ENCODE measurements at regions of chr1 and their contacts with region 1.

Region 1: GRCh38 chr1:37479255-37480124 is 5.1 kb downstream of the ZC3H12A start:
- DNase-seq: peak; percentile 97
- H3K4me3 Mint-ChIP-seq: peak overlapping the region; percentile 87
- H3K27ac Mint-ChIP-seq: peak overlapping the region; percentile 99
- H3K4me1 Mint-ChIP-seq: peaks cover 35% of the 10 kb centered on the region
- H3K27me3 Mint-ChIP-seq: no peaks in the 10 kb centered on the region

Region 2: GRCh38 chr1:36155408-36156328 is 1323.8 kb before region 1 on chr1 and contains the start of gene MAP7D1:
- CTCF ChIA-PET with region 1: no interaction called
- intact Hi-C with region 1: loop called (anchors 2 kb)
- DNase-seq: peak; percentile 88
- H3K4me3 Mint-ChIP-seq: peak within 1 kb of the TSS; percentile 90
- H3K27ac Mint-ChIP-seq: peak within 1 kb of the TSS; percentile 94
- H3K4me1 Mint-ChIP-seq: peaks cover 66% of the 10 kb centered on the region
- H3K27me3 Mint-ChIP-seq: no peaks in the 10 kb centered on the region
- total RNA-seq, gene MAP7D1: 106 TPM

Region 3: GRCh38 chr1:36796106-36796590 is 683.3 kb before region 1 on chr1:
- CTCF ChIA-PET with region 1: no interaction called
- intact Hi-C with region 1: no loop called
- DNase-seq: no peak
- H3K4me3 Mint-ChIP-seq: no peak overlapping the region
- H3K27ac Mint-ChIP-seq: no peak overlapping the region
- H3K4me1 Mint-ChIP-seq: no peaks in the 10 kb centered on the region
- H3K27me3 Mint-ChIP-seq: peaks cover 3% of the 10 kb centered on the region

Region 4: DNA sequence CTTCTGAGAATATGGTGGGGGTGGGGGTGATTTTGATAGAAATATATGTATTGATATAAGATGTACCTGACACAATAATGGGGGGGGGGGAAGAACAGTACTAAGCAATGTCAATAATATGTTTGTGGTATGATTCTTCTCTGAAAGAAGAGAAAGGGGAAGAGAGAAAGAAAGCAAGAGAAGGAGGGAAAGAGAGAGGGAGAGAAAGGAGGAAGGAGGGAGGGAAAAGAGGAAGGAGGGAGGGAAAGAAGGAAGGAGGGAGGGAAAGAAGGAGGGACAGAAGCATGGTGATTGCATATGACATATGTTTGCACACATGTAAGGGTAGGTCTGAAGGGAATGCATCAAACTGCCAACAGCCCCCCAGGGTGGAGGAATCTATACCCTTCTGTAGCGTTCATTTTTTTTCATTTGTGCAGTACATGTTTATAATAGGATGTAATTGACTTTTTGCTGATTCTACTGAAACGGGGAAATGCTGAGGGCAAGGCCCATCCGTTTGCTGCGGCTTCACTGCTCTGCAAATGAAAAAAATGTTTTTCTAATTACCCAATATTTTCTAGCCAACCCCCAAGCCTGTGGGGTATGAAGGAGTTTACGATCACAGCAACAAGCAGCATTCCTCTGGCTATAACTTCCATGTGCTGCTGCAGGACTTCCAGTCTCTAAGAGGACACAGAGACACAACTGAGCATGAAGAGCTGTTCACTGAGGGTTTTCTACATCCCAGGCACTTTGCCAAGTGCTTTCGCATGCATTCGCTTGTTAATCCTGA is 124.4 kb before region 1 on chr1:
- CTCF ChIA-PET with region 1: no interaction called
- intact Hi-C with region 1: no loop called
- DNase-seq: no peak
- H3K4me3 Mint-ChIP-seq: no peak overlapping the region
- H3K27ac Mint-ChIP-seq: no peak overlapping the region
- H3K4me1 Mint-ChIP-seq: no peaks in the 10 kb centered on the region
- H3K27me3 Mint-ChIP-seq: peaks cover 13% of the 10 kb centered on the region

Region 5: DNA sequence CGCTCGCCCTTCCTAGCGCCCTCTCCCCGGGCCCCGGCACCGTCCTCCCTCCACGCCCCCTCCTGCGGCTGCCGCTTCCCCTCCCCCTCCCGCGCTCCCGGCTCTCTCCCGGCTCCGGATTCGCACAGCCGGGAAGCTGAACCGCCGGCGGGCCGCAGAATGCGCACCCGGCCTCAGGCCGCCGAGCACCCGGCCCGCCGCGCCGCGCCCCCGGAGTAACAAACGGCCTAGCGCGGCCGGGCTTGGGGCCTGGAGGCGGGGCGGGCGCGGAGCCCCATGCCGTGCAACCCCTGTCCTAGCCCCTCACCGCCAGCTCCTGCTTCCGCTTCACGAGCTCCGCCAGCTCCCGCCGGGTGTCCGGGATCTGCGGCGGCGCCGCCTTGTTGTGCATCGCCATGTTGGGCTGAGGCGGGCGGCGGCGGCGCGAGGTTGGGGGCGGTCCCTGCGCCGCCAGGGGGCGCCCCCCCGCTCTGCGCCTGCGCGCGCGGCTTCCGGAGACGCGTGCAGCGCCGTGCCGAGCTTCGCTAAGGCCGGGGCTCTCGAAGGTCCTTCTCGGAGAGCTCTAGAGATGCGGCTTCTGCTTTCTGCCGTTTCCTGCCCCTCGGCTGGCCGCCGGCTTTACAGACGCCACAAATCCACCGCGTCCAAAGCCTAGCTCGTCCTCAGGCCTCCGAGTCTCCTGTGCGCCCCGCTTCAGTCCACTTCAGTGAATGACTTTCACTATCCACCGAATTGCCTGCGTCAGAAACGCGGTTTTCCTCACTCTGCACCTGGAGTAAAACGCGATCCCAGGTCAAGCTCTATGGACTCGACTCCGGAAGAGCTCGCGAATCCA is 35.1 kb after region 1 on chr1 and contains the start of gene MEAF6:
- CTCF ChIA-PET with region 1: interaction called, 4 read pairs
- intact Hi-C with region 1: loop called (anchors 1 kb)
- DNase-seq: peak; percentile 81
- H3K4me3 Mint-ChIP-seq: peak within 1 kb of the TSS; percentile 91
- H3K27ac Mint-ChIP-seq: peak within 1 kb of the TSS; percentile 95
- H3K4me1 Mint-ChIP-seq: peaks cover 40% of the 10 kb centered on the region
- H3K27me3 Mint-ChIP-seq: no peaks in the 10 kb centered on the region
- total RNA-seq, gene MEAF6: 57.5 to 62.8 TPM

Region 6: GRCh38 chr1:37595440-37596319 is 116.2 kb after region 1 on chr1 and contains the start of gene GNL2:
- CTCF ChIA-PET with region 1: no interaction called
- intact Hi-C with region 1: loop called (anchors 2 kb)
- DNase-seq: peak; percentile 97
- H3K4me3 Mint-ChIP-seq: peak within 1 kb of the TSS; percentile 99
- H3K27ac Mint-ChIP-seq: peak within 1 kb of the TSS; percentile 90
- H3K4me1 Mint-ChIP-seq: peaks cover 34% of the 10 kb centered on the region
- H3K27me3 Mint-ChIP-seq: no peaks in the 10 kb centered on the region
- total RNA-seq, gene GNL2: 62.2 to 65.3 TPM

Region 7: DNA sequence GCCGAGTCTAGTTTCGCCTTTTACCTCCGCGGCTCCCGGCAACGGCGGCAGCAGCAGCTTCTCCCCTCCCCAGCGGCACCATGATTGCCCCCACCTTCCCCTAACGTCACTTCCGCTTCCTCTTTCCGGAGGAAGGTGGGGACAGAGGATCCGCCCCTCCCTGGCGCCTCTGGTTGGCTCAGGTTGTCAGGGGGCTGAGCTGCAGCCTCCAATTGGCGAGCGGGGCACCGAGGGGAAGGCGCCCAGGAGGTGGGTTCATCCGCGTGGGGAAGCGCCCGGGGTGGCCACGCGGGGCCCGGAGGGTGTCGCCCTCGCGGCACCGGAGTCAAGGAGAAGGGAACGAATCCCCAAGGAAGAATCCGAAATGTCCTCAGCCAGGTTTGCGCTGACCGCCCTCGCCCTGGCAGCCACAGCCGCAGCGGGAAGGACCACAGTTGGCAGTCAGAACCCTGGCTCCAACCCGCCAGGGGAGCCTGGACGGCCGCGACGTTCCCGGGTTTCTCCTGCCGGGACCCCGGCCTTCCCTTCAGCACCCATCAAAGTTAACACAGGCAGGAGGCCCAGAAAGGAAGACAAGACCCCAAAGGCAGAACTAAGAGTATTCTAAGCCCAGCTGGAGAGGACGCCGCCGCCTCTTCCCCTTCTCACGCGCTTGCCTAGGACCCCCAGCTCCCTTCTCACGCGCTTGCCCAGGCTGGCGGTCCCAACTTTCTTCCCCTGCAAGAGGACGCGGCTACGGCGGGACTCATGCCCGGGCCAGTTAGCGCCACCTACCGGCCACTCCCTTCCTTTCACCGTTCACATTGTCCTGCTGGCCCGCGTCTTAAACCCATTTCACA is 380.2 kb after region 1 on chr1 and contains the start of gene MTF1:
- CTCF ChIA-PET with region 1: no interaction called
- intact Hi-C with region 1: loop called (anchors 2 kb)
- DNase-seq: peak; percentile 98
- H3K4me3 Mint-ChIP-seq: peak within 1 kb of the TSS; percentile 92
- H3K27ac Mint-ChIP-seq: peak within 1 kb of the TSS; percentile 84
- H3K4me1 Mint-ChIP-seq: peaks cover 39% of the 10 kb centered on the region
- H3K27me3 Mint-ChIP-seq: no peaks in the 10 kb centered on the region
- total RNA-seq, gene MTF1: 18.9 to 19.1 TPM

Measured in activated naive CD4-positive, alpha-beta T cell treated with anti-CD3 and anti-CD28 coated beads for 36 hours (primary cell).